CD14-positive monocyte (primary cell): ENCODE measurements at regions of chr2 and their contacts with region 1.

Region 1: GRCh38 chr2:10302479-10303180 is at the start of gene HPCAL1:
- DNase-seq: peak; percentile 90 to 91 (median 90)
- H3K4me3 ChIP-seq: peak within 1 kb of the TSS; percentile 79 to 93 (median 84)
- H3K4me3 Mint-ChIP-seq: peak within 1 kb of the TSS; percentile 98 to 100
- H3K27ac ChIP-seq: peak within 1 kb of the TSS; percentile 87 to 94
- H3K27ac Mint-ChIP-seq: peak within 1 kb of the TSS; percentile 83 to 95 (median 92)
- H3K4me1 ChIP-seq: peaks cover 64 to 92% of the 10 kb centered on the region in 2 donors
- H3K4me1 Mint-ChIP-seq: peaks cover 76% of the 10 kb centered on the region
- H3K27me3 ChIP-seq: no peaks in the 10 kb centered on the region
- H3K27me3 Mint-ChIP-seq: peaks cover 0 to 5% (median 4%) of the 10 kb centered on the region in 3 donors
- CTCF ChIP-seq: peak; percentile 76
- polyA plus RNA-seq, gene HPCAL1: 82.1 to 99.5 (median 98.0) TPM

Region 2: GRCh38 chr2:10331027-10331701 is 28.5 kb after region 1 on chr2:
- intact Hi-C with region 1: loop called in 1 of 2 experiments (anchors 2 kb)
- DNase-seq: peak; percentile 50 to 61 (median 55)
- H3K4me3 ChIP-seq: peak overlapping the region in 2 of 3 experiments; percentile 28 to 63
- H3K4me3 Mint-ChIP-seq: peak overlapping the region; percentile 66 to 86
- H3K27ac ChIP-seq: peak overlapping the region; percentile 91 to 93
- H3K27ac Mint-ChIP-seq: peak overlapping the region; percentile 97 to 99 (median 98)
- H3K4me1 ChIP-seq: peaks cover 46 to 66% of the 10 kb centered on the region in 2 donors
- H3K4me1 Mint-ChIP-seq: peaks cover 70% of the 10 kb centered on the region
- H3K27me3 ChIP-seq: no peaks in the 10 kb centered on the region
- H3K27me3 Mint-ChIP-seq: peaks cover 0 to 4% (median 1%) of the 10 kb centered on the region in 3 donors
- CTCF ChIP-seq: peak; percentile 22

Region 3: GRCh38 chr2:10378189-10378588 is 75.6 kb after region 1 on chr2:
- intact Hi-C with region 1: no loop called
- DNase-seq: no peak
- H3K4me3 ChIP-seq: no peak overlapping the region
- H3K4me3 Mint-ChIP-seq: no peak overlapping the region
- H3K27ac ChIP-seq: no peak overlapping the region
- H3K27ac Mint-ChIP-seq: peak overlapping the region in 1 of 7 donors; percentile 46
- H3K4me1 ChIP-seq: peaks cover 66 to 71% of the 10 kb centered on the region in 2 donors
- H3K4me1 Mint-ChIP-seq: peaks cover 78% of the 10 kb centered on the region
- H3K27me3 ChIP-seq: no peaks in the 10 kb centered on the region
- H3K27me3 Mint-ChIP-seq: peaks cover 0 to 2% (median 2%) of the 10 kb centered on the region in 3 donors
- CTCF ChIP-seq: no peak